HEK293 (cell line): ENCODE measurements at regions of chr18 and their contacts with region 1.

Region 1: GRCh38 chr18:45566025-45566740 is 49.1 kb upstream of the SLC14A2 start:
- H3K4me3 ChIP-seq: no peak overlapping the region
- H3K27ac ChIP-seq: peak overlapping the region; percentile 17; the same call in 1 of the 2 replicates
- H3K4me1 ChIP-seq: peaks cover 37% of the 10 kb centered on the region
- CTCF ChIP-seq: no peak

Region 2: GRCh38 chr18:45551142-45551815 is 14.9 kb before region 1 on chr18:
- CTCF ChIA-PET with region 1: no interaction called
- POLR2A ChIA-PET with region 1: no interaction called
- H3K4me3 ChIP-seq: no peak overlapping the region
- H3K27ac ChIP-seq: no peak overlapping the region
- H3K4me1 ChIP-seq: no peaks in the 10 kb centered on the region
- CTCF ChIP-seq: no peak

Region 3: GRCh38 chr18:45589356-45590035 is 23.3 kb after region 1 on chr18:
- CTCF ChIA-PET with region 1: interaction called, 3 read pairs
- POLR2A ChIA-PET with region 1: interaction called, 17 read pairs
- H3K4me3 ChIP-seq: no peak overlapping the region
- H3K27ac ChIP-seq: peak overlapping the region; percentile 98
- H3K4me1 ChIP-seq: peaks cover 26% of the 10 kb centered on the region
- CTCF ChIP-seq: peak; percentile 59